ENCODE measurements at regions of chr10 and their contacts with region 1.

Region 1: GRCh38 chr10:290026-290725 is 154.9 kb downstream of the ZMYND11 start:
- DNase-seq: no peak
- H3K4me3 ChIP-seq: no peak overlapping the region
- H3K27ac ChIP-seq: no peak overlapping the region
- H3K4me1 ChIP-seq: no peaks in the 10 kb centered on the region
- H3K27me3 ChIP-seq: no peaks in the 10 kb centered on the region
- CTCF ChIP-seq: no peak
- EP300 ChIP-seq: no peak
- POLR2A ChIP-seq: no peak

Region 2: GRCh38 chr10:112246-112645 is 177.9 kb before region 1 on chr10:
- in situ Hi-C with region 1: no loop called
- intact Hi-C with region 1: no loop called
- DNase-seq: no peak
- H3K4me3 ChIP-seq: no peak overlapping the region
- H3K27ac ChIP-seq: no peak overlapping the region
- H3K4me1 ChIP-seq: no peaks in the 10 kb centered on the region
- H3K27me3 ChIP-seq: no peaks in the 10 kb centered on the region
- CTCF ChIP-seq: no peak
- EP300 ChIP-seq: no peak
- POLR2A ChIP-seq: no peak

Region 3: DNA sequence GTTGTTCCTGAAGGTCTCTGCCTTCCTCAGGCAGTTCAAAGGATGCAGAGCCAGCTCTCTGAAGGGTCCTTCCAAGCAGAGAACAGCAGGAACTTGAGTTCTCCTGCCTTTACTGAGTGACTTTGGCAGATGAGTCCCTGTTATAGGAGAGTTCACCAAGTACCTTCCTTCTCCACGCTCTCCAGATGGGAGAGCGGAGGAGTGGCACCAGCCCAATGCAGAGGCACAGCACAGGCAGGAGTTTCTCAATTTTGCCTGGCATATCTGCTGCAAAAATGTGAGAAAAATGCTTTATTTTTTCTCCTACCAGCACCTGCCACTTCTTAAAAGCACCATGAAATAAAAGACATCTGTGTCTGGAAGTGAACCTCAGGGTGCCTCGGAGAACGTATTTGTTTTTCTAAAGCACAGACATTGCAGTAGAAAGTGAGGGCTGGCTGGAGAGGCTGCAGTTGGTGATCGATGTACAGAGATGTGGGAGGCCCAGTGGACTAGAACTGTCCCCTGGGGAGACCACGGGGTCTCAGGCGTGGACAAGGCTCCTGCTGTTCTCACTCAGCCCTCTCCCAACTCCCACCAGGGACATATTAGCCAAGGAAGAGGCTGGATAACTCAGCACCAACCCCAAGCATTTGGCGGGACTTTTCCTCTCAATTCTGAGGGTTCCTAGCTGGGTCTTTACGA is 940.6 kb after region 1 on chr10:
- in situ Hi-C with region 1: no loop called
- intact Hi-C with region 1: loop called (anchors 5 kb)
- DNase-seq: no peak
- H3K4me3 ChIP-seq: no peak overlapping the region
- H3K27ac ChIP-seq: no peak overlapping the region
- H3K4me1 ChIP-seq: no peaks in the 10 kb centered on the region
- H3K27me3 ChIP-seq: no peaks in the 10 kb centered on the region
- CTCF ChIP-seq: no peak
- EP300 ChIP-seq: no peak
- POLR2A ChIP-seq: no peak